Naive thymus-derived CD4-positive, alpha-beta T cell (primary cell): ENCODE measurements at regions of chr3 and their contacts with region 1.

Region 1: DNA sequence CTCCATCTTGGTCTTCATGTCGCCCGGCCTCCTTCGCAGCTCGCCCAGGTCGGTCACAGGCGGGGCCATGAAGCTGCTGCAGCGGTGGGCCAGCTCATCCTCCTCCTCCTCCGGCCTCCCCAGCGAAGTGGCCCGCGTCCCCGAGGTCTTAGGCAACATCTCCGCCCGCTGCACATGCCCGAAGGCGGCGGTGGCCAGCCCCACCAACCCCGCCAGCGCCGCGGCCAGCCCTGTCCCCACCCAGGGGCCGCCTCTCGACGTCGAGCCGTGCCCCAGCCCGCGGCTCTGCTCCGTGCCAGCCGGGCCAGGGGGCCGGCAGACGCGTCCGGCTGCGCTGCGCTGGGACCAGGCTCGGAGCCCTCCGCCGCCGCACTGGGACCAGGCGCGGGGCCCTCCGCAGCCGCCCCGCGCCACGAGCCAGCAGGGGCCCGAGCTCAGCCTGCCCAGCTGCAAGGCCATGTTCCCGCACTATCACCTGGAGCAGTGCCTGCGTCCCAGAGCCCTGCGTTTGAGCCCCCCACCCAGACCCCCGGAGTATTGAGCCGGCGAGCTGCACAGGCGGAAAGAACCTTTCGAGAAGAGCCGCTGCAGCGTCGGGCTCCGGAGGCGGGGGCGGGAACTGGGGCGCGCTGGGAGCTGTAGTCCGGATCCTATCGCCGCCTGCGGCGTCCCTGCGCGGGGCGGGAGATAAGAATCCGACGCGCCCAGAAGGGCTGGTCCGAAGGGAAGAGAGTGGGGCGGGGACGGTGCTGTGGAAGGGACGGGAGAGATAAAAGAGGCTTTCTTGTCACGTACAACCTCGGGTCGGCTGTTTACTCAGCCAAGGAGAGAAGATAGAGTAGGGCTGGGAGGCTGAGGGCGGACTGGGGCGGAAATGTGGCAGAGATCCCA is at the start of gene CPOX:
- DNase-seq: peak; percentile 62 to 85 (median 73)
- ATAC-seq: peak; percentile 95
- H3K4me3 ChIP-seq: peak within 1 kb of the TSS; percentile 85
- H3K4me3 Mint-ChIP-seq: peak within 1 kb of the TSS; percentile 91 to 99 (median 98)
- H3K27ac ChIP-seq: peak within 1 kb of the TSS; percentile 69
- H3K27ac Mint-ChIP-seq: peak within 1 kb of the TSS; percentile 87 to 98 (median 95)
- H3K4me1 ChIP-seq: peaks cover 11% of the 10 kb centered on the region in 2 donors
- H3K4me1 Mint-ChIP-seq: peaks cover 30 to 52% (median 40%) of the 10 kb centered on the region in 7 donors
- H3K27me3 ChIP-seq: no peaks in the 10 kb centered on the region
- H3K27me3 Mint-ChIP-seq: no peaks in the 10 kb centered on the region
- total RNA-seq, gene CPOX: 11.4 to 67.5 (median 21.6) TPM

Region 2: GRCh38 chr3:97264180-97264579 is 1329.1 kb before region 1 on chr3:
- CTCF ChIA-PET with region 1: no interaction called
- POLR2A ChIA-PET with region 1: no interaction called
- intact Hi-C with region 1: no loop called
- DNase-seq: no peak
- ATAC-seq: no peak
- H3K4me3 ChIP-seq: no peak overlapping the region
- H3K4me3 Mint-ChIP-seq: no peak overlapping the region
- H3K27ac ChIP-seq: no peak overlapping the region
- H3K27ac Mint-ChIP-seq: peak overlapping the region in 1 of 9 donors; percentile 78
- H3K4me1 ChIP-seq: no peaks in the 10 kb centered on the region
- H3K4me1 Mint-ChIP-seq: no peaks in the 10 kb centered on the region
- H3K27me3 ChIP-seq: no peaks in the 10 kb centered on the region
- H3K27me3 Mint-ChIP-seq: peaks cover 0 to 5% (median 0%) of the 10 kb centered on the region in 5 donors

Region 3: DNA sequence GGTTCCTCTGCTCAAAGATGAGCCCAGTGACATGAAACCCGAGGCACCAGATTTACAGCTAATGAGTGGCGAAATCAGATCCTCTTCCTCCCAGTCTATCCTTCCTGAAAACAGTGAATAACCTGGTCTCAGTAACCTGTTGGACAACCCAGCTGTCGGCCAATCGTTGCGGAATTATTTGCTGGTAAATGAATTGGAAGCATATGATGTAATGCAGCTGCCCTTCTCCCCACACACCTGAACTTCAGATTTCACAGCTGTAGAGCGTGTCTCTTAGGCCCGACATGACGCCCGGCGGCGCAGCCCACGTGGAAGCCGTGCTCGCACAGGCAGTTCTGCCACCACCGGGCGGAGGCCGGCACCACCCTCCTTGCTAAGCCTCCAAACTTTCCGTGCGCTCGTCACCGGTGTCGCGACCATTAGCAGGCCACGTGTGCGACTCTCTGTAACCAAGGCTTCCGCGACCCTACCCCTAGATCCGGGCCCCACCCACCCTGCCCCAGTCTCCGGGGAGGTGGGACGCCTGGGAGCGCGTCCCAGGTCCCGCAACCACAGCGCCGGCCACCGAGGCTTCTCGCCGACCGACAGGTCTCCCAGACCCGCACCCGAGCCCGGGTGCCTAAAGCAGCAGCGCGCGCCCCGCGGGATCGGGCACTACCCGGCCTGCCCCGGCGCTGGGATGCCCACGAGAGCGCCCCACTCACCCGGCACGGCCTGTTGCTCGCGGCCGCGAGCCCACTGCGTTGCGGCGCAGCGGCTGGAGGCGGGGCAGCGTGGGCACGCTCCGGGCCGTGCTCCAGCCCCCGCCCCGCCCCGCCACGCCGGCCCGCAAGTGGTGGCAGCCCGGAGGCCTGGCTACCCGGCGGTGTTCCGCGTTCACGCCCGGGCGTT is 621.4 kb before region 1 on chr3 and contains the start of gene RIOX2:
- CTCF ChIA-PET with region 1: no interaction called
- POLR2A ChIA-PET with region 1: no interaction called
- intact Hi-C with region 1: loop called in 1 of 2 experiments (anchors 5 kb)
- DNase-seq: peak; percentile 62 to 82 (median 77)
- ATAC-seq: peak; percentile 94
- H3K4me3 ChIP-seq: peak within 1 kb of the TSS; percentile 57
- H3K4me3 Mint-ChIP-seq: peak within 1 kb of the TSS; percentile 78 to 97 (median 93)
- H3K27ac ChIP-seq: peak within 1 kb of the TSS; percentile 74
- H3K27ac Mint-ChIP-seq: peak within 1 kb of the TSS; percentile 84 to 96 (median 90)
- H3K4me1 ChIP-seq: peaks cover 9 to 24% of the 10 kb centered on the region in 2 donors
- H3K4me1 Mint-ChIP-seq: peaks cover 42 to 85% (median 70%) of the 10 kb centered on the region in 7 donors
- H3K27me3 ChIP-seq: no peaks in the 10 kb centered on the region
- H3K27me3 Mint-ChIP-seq: no peaks in the 10 kb centered on the region
- total RNA-seq, gene RIOX2: 17.8 to 110 (median 28.4) TPM

Region 4: GRCh38 chr3:98497381-98497780 is 95.9 kb before region 1 on chr3 and contains the start of gene OR5K2:
- CTCF ChIA-PET with region 1: no interaction called
- POLR2A ChIA-PET with region 1: no interaction called
- intact Hi-C with region 1: no loop called
- DNase-seq: no peak
- ATAC-seq: no peak
- H3K4me3 ChIP-seq: no peak within 1 kb of the TSS
- H3K4me3 Mint-ChIP-seq: no peak within 1 kb of the TSS
- H3K27ac ChIP-seq: no peak within 1 kb of the TSS
- H3K27ac Mint-ChIP-seq: no peak within 1 kb of the TSS
- H3K4me1 ChIP-seq: no peaks in the 10 kb centered on the region
- H3K4me1 Mint-ChIP-seq: no peaks in the 10 kb centered on the region
- H3K27me3 ChIP-seq: no peaks in the 10 kb centered on the region
- H3K27me3 Mint-ChIP-seq: peaks cover 0 to 24% (median 6%) of the 10 kb centered on the region in 5 donors
- total RNA-seq, gene OR5K2: not detected

Region 5: GRCh38 chr3:98540346-98540745 is 52.9 kb before region 1 on chr3:
- CTCF ChIA-PET with region 1: no interaction called
- POLR2A ChIA-PET with region 1: interaction called, 4 read pairs
- intact Hi-C with region 1: loop called in 1 of 2 experiments (anchors 2 kb)
- DNase-seq: no peak
- ATAC-seq: no peak
- H3K4me3 ChIP-seq: no peak overlapping the region
- H3K4me3 Mint-ChIP-seq: peak overlapping the region in 1 of 10 donors; percentile 49
- H3K27ac ChIP-seq: no peak overlapping the region
- H3K27ac Mint-ChIP-seq: peak overlapping the region in 1 of 9 donors; percentile 75
- H3K4me1 ChIP-seq: peaks cover 0 to 12% of the 10 kb centered on the region in 2 donors
- H3K4me1 Mint-ChIP-seq: peaks cover 0 to 64% (median 0%) of the 10 kb centered on the region in 7 donors
- H3K27me3 ChIP-seq: no peaks in the 10 kb centered on the region
- H3K27me3 Mint-ChIP-seq: no peaks in the 10 kb centered on the region

Region 6: DNA sequence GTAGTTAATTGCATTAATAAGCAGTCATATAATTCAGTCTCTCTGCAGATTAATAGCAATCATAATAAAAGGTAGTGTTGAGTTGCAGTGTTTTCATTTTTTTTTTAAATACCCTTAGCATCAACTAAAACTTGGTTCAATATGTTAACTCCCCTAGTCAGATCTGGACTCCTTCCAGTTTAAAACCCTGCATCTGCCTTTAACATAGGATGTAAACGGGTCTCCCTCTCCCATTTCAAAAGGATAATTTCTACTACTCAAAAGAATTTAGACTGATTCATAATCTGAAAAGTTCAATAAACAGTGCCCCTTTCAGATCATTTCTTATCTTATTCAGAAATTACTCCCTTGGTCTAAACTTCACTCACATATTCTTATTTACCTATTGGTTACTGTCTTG is 11.2 kb before region 1 on chr3:
- CTCF ChIA-PET with region 1: interaction called, 5 read pairs
- POLR2A ChIA-PET with region 1: interaction called, 3 read pairs
- intact Hi-C with region 1: loop called in 1 of 2 experiments (anchors 1 kb)
- DNase-seq: no peak
- ATAC-seq: no peak
- H3K4me3 ChIP-seq: no peak overlapping the region
- H3K4me3 Mint-ChIP-seq: no peak overlapping the region
- H3K27ac ChIP-seq: no peak overlapping the region
- H3K27ac Mint-ChIP-seq: peak overlapping the region in 1 of 9 donors; percentile 1
- H3K4me1 ChIP-seq: no peaks in the 10 kb centered on the region
- H3K4me1 Mint-ChIP-seq: peaks cover 0 to 51% (median 13%) of the 10 kb centered on the region in 7 donors
- H3K27me3 ChIP-seq: no peaks in the 10 kb centered on the region
- H3K27me3 Mint-ChIP-seq: no peaks in the 10 kb centered on the region

Region 7: GRCh38 chr3:99753268-99753975 is 1160.1 kb after region 1 on chr3:
- CTCF ChIA-PET with region 1: interaction called, 3 read pairs
- POLR2A ChIA-PET with region 1: no interaction called
- intact Hi-C with region 1: loop called in 1 of 2 experiments (anchors 1 kb)
- DNase-seq: peak in 6 of 9 donors; percentile 13 to 27 (median 22)
- ATAC-seq: peak; percentile 66
- H3K4me3 ChIP-seq: no peak overlapping the region
- H3K4me3 Mint-ChIP-seq: no peak overlapping the region
- H3K27ac ChIP-seq: no peak overlapping the region
- H3K27ac Mint-ChIP-seq: no peak overlapping the region
- H3K4me1 ChIP-seq: no peaks in the 10 kb centered on the region
- H3K4me1 Mint-ChIP-seq: no peaks in the 10 kb centered on the region
- H3K27me3 ChIP-seq: no peaks in the 10 kb centered on the region
- H3K27me3 Mint-ChIP-seq: peaks cover 0 to 37% (median 14%) of the 10 kb centered on the region in 5 donors